MCF 10A (cell line): ENCODE measurements at regions of chr12 and their contacts with region 1.

Region 1: DNA sequence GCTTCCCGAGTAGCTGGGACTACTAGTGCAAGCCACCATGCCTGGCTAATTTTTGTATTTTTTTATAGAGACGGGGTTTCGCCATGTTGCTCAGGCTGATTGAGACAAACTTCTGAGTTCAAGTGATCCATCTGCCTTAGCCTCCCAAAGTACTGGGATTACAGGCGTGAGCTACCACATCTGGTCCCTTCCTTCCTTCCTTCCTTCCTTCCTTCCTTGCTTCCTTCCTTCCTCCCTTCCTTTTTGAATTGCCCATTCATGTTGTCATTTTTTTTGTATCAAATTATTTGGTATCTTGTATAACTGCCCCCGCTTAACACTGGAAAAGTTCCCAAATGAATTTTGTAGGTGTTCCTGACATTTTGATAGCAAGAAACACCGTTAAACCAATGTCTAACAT is 11.7 kb downstream of the RAD9B start:
- DNase-seq: no peak
- H3K4me3 Mint-ChIP-seq: no peak overlapping the region
- H3K27ac Mint-ChIP-seq: peak overlapping the region; percentile 4
- H3K4me1 Mint-ChIP-seq: no peaks in the 10 kb centered on the region
- H3K27me3 Mint-ChIP-seq: no peaks in the 10 kb centered on the region
- CTCF ChIP-seq: no peak

Region 2: DNA sequence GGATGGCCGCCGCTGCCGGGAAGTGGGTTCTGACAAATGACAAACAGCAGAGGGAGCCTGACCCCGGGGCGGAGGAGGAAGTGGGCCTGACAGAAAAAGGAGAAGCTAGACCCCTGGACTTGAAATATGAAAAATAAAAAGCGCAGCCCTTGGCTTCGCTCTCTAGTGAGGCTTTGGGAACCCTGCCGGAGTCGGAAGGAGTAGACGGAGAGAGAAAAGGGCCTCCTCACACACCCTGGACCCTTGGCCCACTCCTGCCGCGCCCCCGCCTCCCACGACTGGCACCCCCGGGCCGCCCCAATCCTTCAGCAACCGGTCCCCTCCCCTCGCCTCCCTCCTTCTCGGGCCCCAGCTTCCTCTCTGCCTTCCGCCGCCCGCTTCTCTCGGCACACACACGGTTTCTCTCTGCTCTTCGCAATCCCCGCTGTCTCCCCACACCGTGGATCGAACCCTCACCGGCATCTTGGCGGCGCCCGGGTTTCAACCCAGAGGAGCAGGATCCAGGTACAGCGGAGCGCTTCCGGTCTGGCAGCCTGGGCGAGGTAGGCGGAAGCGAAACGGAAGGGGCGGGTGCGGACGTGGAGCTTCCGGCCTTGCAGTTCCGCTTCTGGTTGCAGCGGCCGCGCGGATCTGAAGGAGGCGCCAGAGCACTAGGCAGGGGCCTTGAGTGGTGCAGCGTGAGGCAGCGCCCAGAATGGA is 63.9 kb before region 1 on chr12 and contains the start of gene ARPC3:
- CTCF ChIA-PET with region 1: interaction called, 13 read pairs
- POLR2A ChIA-PET with region 1: no interaction called
- intact Hi-C with region 1: no loop called
- DNase-seq: peak; percentile 93
- H3K4me3 Mint-ChIP-seq: peak within 1 kb of the TSS; percentile 99
- H3K27ac Mint-ChIP-seq: peak within 1 kb of the TSS; percentile 100
- H3K4me1 Mint-ChIP-seq: peaks cover 5% of the 10 kb centered on the region
- H3K27me3 Mint-ChIP-seq: no peaks in the 10 kb centered on the region
- CTCF ChIP-seq: peak; percentile 83
- total RNA-seq, gene ARPC3: 230 and 245 TPM in 2 replicates

Region 3: DNA sequence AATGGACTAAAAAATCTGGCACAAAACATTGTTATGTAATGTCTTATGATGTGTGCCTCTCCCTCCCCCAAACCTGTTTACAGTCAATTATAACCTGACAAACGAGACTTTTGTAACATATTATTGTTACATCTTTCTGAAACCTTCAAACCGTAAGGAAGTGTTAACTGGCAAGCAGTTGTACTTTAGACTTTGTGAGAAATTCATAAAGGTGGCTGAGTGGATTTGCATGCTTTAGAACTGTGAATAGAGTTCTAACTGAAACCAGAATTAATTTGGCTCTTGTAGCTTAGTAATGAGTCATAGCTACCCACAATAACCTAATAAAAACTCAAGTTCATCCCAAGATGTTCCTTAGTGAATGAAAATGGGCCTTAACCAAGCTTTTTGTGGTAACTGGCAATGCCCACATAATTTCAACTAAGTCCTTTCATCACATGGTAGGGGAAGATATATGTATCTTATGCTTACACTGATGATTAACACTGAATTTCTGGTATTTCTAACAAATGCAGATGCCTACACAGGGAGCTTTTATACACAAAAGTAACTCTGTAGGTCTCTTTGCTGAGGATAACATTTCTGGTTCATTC is 18.0 kb after region 1 on chr12:
- CTCF ChIA-PET with region 1: interaction called, 6 read pairs
- POLR2A ChIA-PET with region 1: interaction called, 19 read pairs
- intact Hi-C with region 1: no loop called
- DNase-seq: peak; percentile 73
- H3K4me3 Mint-ChIP-seq: no peak overlapping the region
- H3K27ac Mint-ChIP-seq: peak overlapping the region; percentile 42
- H3K4me1 Mint-ChIP-seq: peaks cover 18% of the 10 kb centered on the region
- H3K27me3 Mint-ChIP-seq: no peaks in the 10 kb centered on the region
- CTCF ChIP-seq: no peak

Region 4: DNA sequence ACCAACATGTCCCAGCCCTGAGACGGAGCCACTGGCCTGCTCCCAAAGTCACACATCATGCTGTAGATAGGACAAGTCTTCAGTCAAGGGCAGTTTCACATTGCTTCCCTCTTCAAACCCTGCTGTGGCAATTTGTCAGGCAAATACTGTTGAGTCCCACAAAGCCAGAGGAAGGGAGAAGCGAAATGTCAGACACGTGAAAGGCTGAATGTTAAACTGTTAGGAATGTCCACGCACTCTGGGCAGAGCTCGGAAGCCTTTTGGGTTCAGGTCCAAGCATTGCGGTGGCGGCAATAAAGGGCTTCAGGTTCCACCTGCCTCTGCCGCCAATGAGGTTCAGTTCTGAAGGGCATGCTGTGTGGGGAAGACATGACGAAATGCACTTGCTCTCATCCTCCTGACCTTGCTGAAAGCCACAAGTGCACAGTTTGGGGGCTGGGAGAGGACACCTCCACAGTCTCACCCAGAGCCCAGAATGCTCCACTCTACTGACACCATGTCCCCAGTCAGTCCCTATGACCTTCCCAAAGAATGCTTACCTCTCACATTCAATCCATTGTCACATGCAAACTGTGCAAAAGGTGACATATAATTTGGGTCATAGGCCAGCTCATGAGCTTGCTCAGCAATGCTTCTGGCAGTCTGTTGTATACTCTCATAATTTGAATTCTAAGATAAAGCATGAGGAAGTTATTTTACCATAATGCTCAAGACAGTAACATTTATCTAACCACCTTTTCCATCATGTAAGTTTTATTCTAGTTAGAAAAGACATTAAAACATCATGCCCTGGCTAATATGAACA is 24.0 kb after region 1 on chr12:
- CTCF ChIA-PET with region 1: interaction called, 5 read pairs
- POLR2A ChIA-PET with region 1: interaction called, 19 read pairs
- intact Hi-C with region 1: loop called (anchors 2 kb)
- DNase-seq: peak; percentile 97
- H3K4me3 Mint-ChIP-seq: peak overlapping the region; percentile 47
- H3K27ac Mint-ChIP-seq: peak overlapping the region; percentile 69
- H3K4me1 Mint-ChIP-seq: peaks cover 40% of the 10 kb centered on the region
- H3K27me3 Mint-ChIP-seq: no peaks in the 10 kb centered on the region
- CTCF ChIP-seq: no peak

Region 5: GRCh38 chr12:110555577-110556406 is 42.0 kb after region 1 on chr12:
- CTCF ChIA-PET with region 1: interaction called, 11 read pairs
- POLR2A ChIA-PET with region 1: interaction called, 8 read pairs
- intact Hi-C with region 1: loop called (anchors 2 kb)
- DNase-seq: peak; percentile 78
- H3K4me3 Mint-ChIP-seq: peak overlapping the region; percentile 49
- H3K27ac Mint-ChIP-seq: peak overlapping the region; percentile 97
- H3K4me1 Mint-ChIP-seq: peaks cover 55% of the 10 kb centered on the region
- H3K27me3 Mint-ChIP-seq: no peaks in the 10 kb centered on the region
- CTCF ChIP-seq: no peak

Region 6: DNA sequence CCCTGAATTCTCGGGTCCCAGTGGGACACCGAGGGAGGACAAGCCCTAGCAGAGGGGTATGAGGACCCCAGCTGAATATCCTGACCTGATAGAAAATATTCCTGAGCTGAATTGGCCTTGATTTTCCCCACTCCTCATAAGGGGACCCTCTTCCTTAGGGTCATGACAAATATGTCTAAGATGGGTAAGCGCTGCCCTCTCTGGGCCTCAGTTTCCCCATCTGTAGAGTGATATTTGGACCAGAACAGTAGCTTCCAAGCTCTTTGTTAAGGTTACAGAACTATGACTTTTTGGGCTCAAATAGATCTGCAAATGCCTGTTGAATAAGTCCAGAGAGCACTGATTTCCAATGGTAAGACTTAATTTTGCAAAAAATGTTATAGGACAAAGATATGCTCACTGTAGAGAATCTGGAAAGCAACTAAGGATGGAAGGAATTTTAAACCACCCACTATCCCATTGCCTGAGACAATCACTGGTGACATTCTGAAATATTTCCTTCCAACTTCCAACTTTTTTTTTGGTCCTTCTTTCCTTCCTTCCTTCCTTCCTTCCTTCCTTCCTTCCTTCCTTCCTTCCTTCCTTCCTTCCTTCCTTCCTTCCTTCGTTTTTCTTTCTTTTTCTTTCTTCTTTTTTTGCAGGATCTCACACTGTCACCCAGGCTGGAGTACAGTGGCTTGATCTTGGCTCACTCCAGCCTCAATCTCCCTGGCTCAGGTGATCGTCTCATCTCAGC is 374.6 kb after region 1 on chr12:
- CTCF ChIA-PET with region 1: no interaction called
- POLR2A ChIA-PET with region 1: no interaction called
- intact Hi-C with region 1: loop called (anchors 2 kb)
- DNase-seq: no peak
- H3K4me3 Mint-ChIP-seq: peak overlapping the region; percentile 86
- H3K27ac Mint-ChIP-seq: peak overlapping the region; percentile 35
- H3K4me1 Mint-ChIP-seq: peaks cover 9% of the 10 kb centered on the region
- H3K27me3 Mint-ChIP-seq: peaks cover 17% of the 10 kb centered on the region
- CTCF ChIP-seq: no peak